ENCODE measurements at regions of chr10 and their contacts with region 1.

Region 1: GRCh38 chr10:103712570-103713498 is 142.5 kb downstream of the SH3PXD2A start:
- DNase-seq: peak; percentile 69 to 78 (median 71)
- H3K4me3 ChIP-seq: no peak overlapping the region
- H3K4me3 Mint-ChIP-seq: no peak overlapping the region
- H3K27ac ChIP-seq: no peak overlapping the region
- H3K27ac Mint-ChIP-seq: peak overlapping the region in 3 of 7 donors; percentile 6 to 56 (median 7)
- H3K4me1 ChIP-seq: no peaks in the 10 kb centered on the region
- H3K4me1 Mint-ChIP-seq: peaks cover 0 to 4% (median 1%) of the 10 kb centered on the region in 4 donors
- H3K27me3 ChIP-seq: no peaks in the 10 kb centered on the region
- H3K27me3 Mint-ChIP-seq: no peaks in the 10 kb centered on the region

Region 2: DNA sequence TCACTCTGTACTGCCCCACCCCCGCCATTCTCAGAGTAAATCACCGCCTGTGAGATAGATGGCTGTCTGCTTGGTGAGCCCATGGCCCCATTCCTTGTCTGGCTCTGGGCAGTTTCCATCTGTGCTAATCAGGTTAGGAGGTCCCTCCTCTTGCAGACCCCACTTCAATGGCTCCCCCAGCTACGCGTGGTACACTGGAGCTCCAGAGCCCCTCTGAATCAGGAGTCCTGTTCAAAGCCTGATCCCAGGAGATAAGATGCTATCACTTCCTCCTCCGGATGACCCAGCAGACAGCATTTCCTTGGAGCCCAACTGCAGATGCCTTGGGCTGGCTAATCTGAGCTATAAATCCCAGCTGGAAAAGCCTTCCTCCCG is 20.2 kb after region 1 on chr10:
- CTCF ChIA-PET with region 1: interaction called, 12 read pairs
- POLR2A ChIA-PET with region 1: no interaction called
- intact Hi-C with region 1: no loop called
- DNase-seq: no peak
- H3K4me3 ChIP-seq: no peak overlapping the region
- H3K4me3 Mint-ChIP-seq: no peak overlapping the region
- H3K27ac ChIP-seq: no peak overlapping the region
- H3K27ac Mint-ChIP-seq: no peak overlapping the region
- H3K4me1 ChIP-seq: no peaks in the 10 kb centered on the region
- H3K4me1 Mint-ChIP-seq: peaks cover 0 to 12% (median 2%) of the 10 kb centered on the region in 4 donors
- H3K27me3 ChIP-seq: no peaks in the 10 kb centered on the region
- H3K27me3 Mint-ChIP-seq: no peaks in the 10 kb centered on the region

Region 3: DNA sequence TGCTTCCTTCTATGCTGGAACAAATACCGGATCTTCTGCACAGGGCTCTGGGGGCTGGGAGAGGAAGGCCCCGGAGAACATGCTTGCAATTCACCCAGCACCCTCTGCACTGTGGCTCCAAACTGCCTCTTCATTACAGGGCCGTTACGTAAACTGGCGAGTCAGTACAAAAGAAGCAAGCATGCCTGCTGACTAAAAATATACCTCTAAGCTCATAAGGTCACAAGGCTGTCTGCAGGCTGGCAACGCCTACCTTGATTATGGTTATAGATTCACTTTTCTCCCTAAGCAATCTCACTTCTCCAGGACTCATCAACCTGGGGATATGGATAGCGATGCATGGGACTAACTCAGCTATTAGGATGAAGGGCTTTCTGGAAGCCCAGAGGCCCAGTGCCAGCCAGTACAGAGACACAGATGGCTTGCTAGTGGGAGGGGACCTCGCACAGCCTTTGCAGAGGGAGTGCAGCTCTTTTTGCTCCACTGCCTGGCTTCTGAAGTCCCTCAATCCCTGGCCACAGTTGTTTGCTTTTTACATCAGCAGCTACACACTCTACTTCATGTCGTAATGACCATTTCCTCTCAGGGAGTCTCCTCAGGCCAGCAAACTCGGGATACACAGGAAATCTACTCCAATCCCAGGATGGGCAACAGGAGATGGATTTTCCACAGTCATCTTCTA is 46.4 kb after region 1 on chr10:
- CTCF ChIA-PET with region 1: interaction called, 27 read pairs
- POLR2A ChIA-PET with region 1: interaction called, 4 read pairs
- intact Hi-C with region 1: no loop called
- DNase-seq: peak in 4 of 5 donors; percentile 24 to 44 (median 31)
- H3K4me3 ChIP-seq: peak overlapping the region in 1 of 2 donors; percentile 1
- H3K4me3 Mint-ChIP-seq: peak overlapping the region in 6 of 8 donors; percentile 51 to 76 (median 70)
- H3K27ac ChIP-seq: no peak overlapping the region
- H3K27ac Mint-ChIP-seq: peak overlapping the region; percentile 70 to 87 (median 79)
- H3K4me1 ChIP-seq: peaks cover 64% of the 10 kb centered on the region
- H3K4me1 Mint-ChIP-seq: peaks cover 33 to 67% (median 52%) of the 10 kb centered on the region in 4 donors
- H3K27me3 ChIP-seq: no peaks in the 10 kb centered on the region
- H3K27me3 Mint-ChIP-seq: no peaks in the 10 kb centered on the region

Region 4: DNA sequence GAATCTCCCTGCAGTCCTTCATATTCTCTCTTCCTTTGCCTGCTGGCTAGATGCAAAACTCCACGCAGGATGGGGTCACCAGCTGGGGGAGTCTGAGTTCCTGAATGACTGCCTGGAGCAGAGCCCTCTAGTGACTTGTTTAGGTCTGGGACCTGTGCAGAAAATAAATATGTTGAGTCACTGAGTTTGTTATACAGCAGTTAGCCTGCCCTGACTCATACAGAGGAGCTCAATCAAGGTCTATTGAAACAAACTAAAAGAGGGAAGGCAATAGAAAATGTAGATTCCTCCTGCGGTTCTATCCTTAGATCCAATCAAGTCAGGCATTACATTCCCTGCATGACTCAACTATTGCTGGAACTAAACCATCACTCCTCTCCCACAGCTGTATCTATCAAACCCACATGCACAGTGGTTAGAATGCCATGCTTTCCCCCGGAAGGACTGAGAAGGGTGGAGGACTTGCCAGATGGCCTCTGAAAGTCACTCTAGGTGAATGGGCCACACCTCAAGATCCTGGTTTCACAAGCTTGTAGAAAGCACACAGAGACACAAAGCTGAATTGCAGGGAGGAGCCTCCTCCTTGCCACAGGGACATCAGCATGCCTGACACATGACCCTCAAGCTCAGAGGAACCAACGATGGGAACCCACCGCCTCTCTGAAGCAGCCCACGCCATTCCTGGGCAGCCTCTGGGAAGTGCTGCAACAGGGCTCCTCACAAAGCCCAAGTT is 68.7 kb after region 1 on chr10:
- CTCF ChIA-PET with region 1: interaction called, 12 read pairs
- POLR2A ChIA-PET with region 1: no interaction called
- intact Hi-C with region 1: no loop called
- DNase-seq: no peak
- H3K4me3 ChIP-seq: no peak overlapping the region
- H3K4me3 Mint-ChIP-seq: no peak overlapping the region
- H3K27ac ChIP-seq: no peak overlapping the region
- H3K27ac Mint-ChIP-seq: no peak overlapping the region
- H3K4me1 ChIP-seq: no peaks in the 10 kb centered on the region
- H3K4me1 Mint-ChIP-seq: peaks cover 0 to 8% (median 3%) of the 10 kb centered on the region in 4 donors
- H3K27me3 ChIP-seq: no peaks in the 10 kb centered on the region
- H3K27me3 Mint-ChIP-seq: peaks cover 6 to 8% of the 10 kb centered on the region in 2 donors

Region 5: DNA sequence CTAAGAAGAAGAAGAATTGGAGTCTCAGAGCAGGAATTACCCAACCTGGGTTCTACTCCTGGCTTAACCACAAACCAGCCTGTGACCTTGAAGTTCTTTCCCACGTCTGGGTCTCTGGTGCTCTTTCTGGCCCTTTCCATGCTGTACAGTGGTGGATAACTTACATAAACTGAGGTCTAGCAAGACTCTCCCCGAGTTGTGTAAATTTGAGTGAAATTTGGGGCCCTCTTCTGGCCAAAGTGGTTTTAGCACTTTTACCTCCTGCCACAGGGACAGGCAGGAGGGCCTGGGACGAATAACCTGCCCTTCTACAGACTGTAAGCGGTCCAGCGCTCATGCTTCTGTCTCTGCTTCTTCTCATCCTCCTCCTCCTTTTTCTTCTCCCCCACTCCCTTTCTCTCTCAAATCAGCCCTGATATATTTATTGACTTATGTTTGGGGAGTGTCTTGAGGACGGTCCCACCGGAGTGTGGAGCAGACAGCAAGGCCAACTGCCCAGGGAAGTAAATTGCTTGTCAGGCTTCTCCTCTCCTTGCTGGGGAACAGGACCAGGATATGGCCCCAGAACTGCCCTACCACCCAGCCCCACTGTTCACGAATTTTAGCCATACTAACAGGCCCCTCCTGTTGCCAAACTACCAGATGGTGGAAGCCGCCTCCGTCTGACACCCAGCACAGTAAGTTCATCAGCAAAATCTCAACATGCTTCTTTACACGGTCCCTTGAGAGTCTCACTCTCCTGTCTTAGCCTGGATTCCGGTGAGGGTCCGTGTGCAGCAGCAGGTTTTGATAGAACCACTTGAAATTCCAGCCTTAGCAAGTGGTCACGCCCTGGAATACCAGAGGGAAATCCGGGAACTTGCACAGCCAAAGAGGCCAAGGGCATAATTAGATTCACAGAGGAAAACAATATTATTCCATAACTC is 146.6 kb after region 1 on chr10:
- CTCF ChIA-PET with region 1: interaction called, 101 read pairs
- POLR2A ChIA-PET with region 1: interaction called, 10 read pairs
- intact Hi-C with region 1: loop called (anchors 1 kb)
- DNase-seq: peak; percentile 51 to 58 (median 54)
- H3K4me3 ChIP-seq: no peak overlapping the region
- H3K4me3 Mint-ChIP-seq: peak overlapping the region in 1 of 8 donors; percentile 15
- H3K27ac ChIP-seq: no peak overlapping the region
- H3K27ac Mint-ChIP-seq: no peak overlapping the region
- H3K4me1 ChIP-seq: peaks cover 13% of the 10 kb centered on the region
- H3K4me1 Mint-ChIP-seq: peaks cover 5 to 12% (median 8%) of the 10 kb centered on the region in 4 donors
- H3K27me3 ChIP-seq: peaks cover 8% of the 10 kb centered on the region
- H3K27me3 Mint-ChIP-seq: peaks cover 5 to 13% of the 10 kb centered on the region in 2 donors

Region 6: DNA sequence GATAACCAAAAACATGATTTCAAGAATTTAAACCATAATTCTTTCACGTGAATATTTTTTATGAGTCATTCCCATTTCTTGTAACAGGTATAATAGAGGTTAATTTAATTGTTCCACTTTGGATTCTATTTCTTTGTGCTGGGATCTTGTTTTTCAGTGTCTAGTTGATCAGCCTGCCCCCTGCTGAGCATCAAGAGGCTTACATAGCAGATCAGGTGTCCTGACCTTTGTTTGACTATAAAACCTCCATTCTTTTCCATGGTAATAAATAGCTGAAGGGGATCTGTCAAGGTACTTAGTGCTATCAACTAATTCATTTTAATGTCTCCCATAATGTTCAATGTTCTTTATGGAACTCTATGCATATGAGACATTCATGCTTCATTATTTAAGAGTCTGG is 367.9 kb after region 1 on chr10:
- CTCF ChIA-PET with region 1: interaction called, 3 read pairs
- POLR2A ChIA-PET with region 1: no interaction called
- intact Hi-C with region 1: loop called (anchors 10 kb)
- DNase-seq: peak in 4 of 5 donors; percentile 9 to 16 (median 12)
- H3K4me3 ChIP-seq: no peak overlapping the region
- H3K4me3 Mint-ChIP-seq: no peak overlapping the region
- H3K27ac ChIP-seq: no peak overlapping the region
- H3K27ac Mint-ChIP-seq: peak overlapping the region in 1 of 7 donors; percentile 40
- H3K4me1 ChIP-seq: no peaks in the 10 kb centered on the region
- H3K4me1 Mint-ChIP-seq: no peaks in the 10 kb centered on the region
- H3K27me3 ChIP-seq: no peaks in the 10 kb centered on the region
- H3K27me3 Mint-ChIP-seq: no peaks in the 10 kb centered on the region

Region 7: DNA sequence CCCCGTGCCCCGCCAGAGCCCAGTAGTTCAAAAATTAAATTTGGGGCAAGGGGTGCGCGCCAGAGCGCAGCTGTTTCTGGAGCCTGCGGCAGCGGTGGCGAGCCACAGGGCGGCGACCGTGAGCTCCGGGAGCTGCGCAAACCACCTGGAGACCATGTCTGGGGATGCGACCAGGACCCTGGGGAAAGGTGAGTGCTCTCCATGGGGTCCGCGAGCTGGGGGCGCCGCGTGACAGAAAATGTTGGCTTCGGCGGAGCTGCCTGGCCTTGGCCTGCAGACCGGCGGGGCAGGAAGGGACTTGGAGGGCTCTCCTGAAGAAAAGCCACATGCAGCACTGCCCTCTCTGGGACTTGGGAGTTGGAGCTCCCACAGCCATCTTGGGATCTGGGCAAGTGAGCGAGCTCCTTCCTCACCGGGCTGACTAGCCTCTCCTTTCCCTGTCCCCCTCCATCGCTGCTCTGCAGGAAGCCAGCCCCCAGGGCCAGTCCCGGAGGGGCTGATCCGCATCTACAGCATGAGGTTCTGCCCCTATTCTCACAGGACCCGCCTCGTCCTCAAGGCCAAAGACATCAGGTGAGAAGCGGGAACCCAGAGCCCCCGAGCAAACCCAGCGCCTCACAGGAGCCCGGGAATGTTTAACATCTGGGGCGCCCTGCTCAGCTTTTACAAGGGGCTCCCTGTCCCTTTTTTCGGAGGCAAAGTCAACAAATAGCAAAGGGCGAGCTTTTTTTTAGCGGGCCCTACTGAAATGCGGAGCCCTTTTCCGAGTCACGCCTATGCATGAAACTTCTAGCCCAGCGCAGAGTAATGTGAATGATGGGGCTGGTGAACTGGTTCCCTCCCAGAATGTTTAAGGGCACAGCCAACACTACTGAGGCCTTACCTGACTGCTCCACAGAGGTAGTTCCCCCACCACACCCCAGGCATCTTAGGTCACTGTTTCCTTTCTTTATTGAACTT is 562.2 kb after region 1 on chr10:
- CTCF ChIA-PET with region 1: interaction called, 10 read pairs
- POLR2A ChIA-PET with region 1: no interaction called
- intact Hi-C with region 1: no loop called
- DNase-seq: peak in 3 of 5 donors; percentile 36 to 43 (median 40)
- H3K4me3 ChIP-seq: no peak overlapping the region
- H3K4me3 Mint-ChIP-seq: peak overlapping the region in 6 of 8 donors; percentile 10 to 71 (median 54)
- H3K27ac ChIP-seq: no peak overlapping the region
- H3K27ac Mint-ChIP-seq: peak overlapping the region in 1 of 7 donors; percentile 35
- H3K4me1 ChIP-seq: peaks cover 11% of the 10 kb centered on the region
- H3K4me1 Mint-ChIP-seq: no peaks in the 10 kb centered on the region
- H3K27me3 ChIP-seq: no peaks in the 10 kb centered on the region
- H3K27me3 Mint-ChIP-seq: peaks cover 9 to 10% of the 10 kb centered on the region in 2 donors

Measured in CD4-positive, alpha-beta memory T cell (primary cell).